ENCODE measurements at regions of chrX and their contacts with region 1.

Region 1: GRCh38 chrX:103533511-103534216 is 14.4 kb upstream of the RAB40A start:
- DNase-seq: peak; percentile 26
- H3K4me3 Mint-ChIP-seq: peak overlapping the region; percentile 65
- H3K27ac Mint-ChIP-seq: no peak overlapping the region
- H3K4me1 Mint-ChIP-seq: peaks cover 4% of the 10 kb centered on the region
- H3K27me3 Mint-ChIP-seq: no peaks in the 10 kb centered on the region

Region 2: DNA sequence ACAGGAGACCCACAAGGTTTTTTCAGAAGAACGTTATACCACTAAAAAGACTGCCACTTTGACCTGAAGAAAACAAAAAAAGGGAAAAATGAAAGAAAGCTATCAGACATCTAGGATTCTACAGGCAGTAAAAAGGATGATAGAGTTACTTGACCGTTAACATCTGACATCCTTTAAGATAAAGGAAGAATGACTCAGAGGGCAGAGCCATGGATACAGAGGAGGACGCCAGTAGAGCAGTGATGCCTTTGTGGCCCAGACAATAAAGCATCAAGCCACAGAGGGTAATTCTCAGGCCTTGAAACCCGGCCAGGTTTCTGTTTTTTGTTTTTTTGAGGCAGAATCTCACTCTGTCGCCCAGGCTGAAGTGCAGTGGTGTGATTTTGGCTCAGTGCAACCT is 460.2 kb before region 1 on chrX:
- intact Hi-C with region 1: no loop called
- DNase-seq: no peak
- H3K4me3 Mint-ChIP-seq: no peak overlapping the region
- H3K27ac Mint-ChIP-seq: no peak overlapping the region
- H3K4me1 Mint-ChIP-seq: no peaks in the 10 kb centered on the region
- H3K27me3 Mint-ChIP-seq: no peaks in the 10 kb centered on the region

Region 3: GRCh38 chrX:103614992-103615391 is 81.3 kb after region 1 on chrX:
- intact Hi-C with region 1: no loop called
- DNase-seq: no peak
- H3K4me3 Mint-ChIP-seq: no peak overlapping the region
- H3K27ac Mint-ChIP-seq: no peak overlapping the region
- H3K4me1 Mint-ChIP-seq: no peaks in the 10 kb centered on the region
- H3K27me3 Mint-ChIP-seq: peaks cover 2% of the 10 kb centered on the region

Region 4: DNA sequence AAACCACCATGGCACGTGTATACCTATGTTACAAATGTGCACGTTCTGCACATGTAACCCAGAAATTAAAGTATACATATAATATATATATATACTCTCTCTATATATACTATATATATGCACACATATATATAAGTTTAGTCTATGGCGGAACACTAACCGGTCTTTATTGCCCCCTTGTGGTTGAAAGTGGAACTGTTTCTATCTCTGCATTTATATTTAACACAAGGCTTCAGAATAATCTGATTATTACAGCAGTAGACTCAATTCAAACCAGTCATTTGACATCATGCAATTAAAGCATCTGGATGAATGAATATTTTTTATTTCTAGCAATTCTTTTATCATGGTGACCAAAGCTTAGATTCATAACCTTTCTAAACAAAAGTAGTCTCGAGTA is 283.8 kb after region 1 on chrX:
- intact Hi-C with region 1: loop called (anchors 2 kb)
- DNase-seq: no peak
- H3K4me3 Mint-ChIP-seq: no peak overlapping the region
- H3K27ac Mint-ChIP-seq: no peak overlapping the region
- H3K4me1 Mint-ChIP-seq: peaks cover 7% of the 10 kb centered on the region
- H3K27me3 Mint-ChIP-seq: peaks cover 22% of the 10 kb centered on the region

Measured in activated T-helper 2 cell treated with anti-CD3 and anti-CD28 coated beads, Interferon-gamma antibody, Interleukin-2, Interleukin-4, amounts not matched to agents 10 μg/mL and 5 μg/mL and 100 μg/mL, durations not matched to agents 14 hours and 24 hours and 36 hours (primary cell).